ENCODE measurements at regions of chr11 and their contacts with region 1.

Region 1: GRCh38 chr11:118198370-118198769 is 21.9 kb upstream of the SCN2B start:
- DNase-seq: peak; percentile 88
- H3K4me3 ChIP-seq: no peak overlapping the region
- H3K27ac ChIP-seq: no peak overlapping the region
- H3K4me1 ChIP-seq: peaks cover 11% of the 10 kb centered on the region
- H3K27me3 ChIP-seq: no peaks in the 10 kb centered on the region
- CTCF ChIP-seq: peak; percentile 90

Region 2: GRCh38 chr11:118290923-118291322 is 92.6 kb after region 1 on chr11:
- intact Hi-C with region 1: loop called (anchors 2 kb)
- DNase-seq: peak; percentile 75
- H3K4me3 ChIP-seq: no peak overlapping the region
- H3K27ac ChIP-seq: no peak overlapping the region
- H3K4me1 ChIP-seq: no peaks in the 10 kb centered on the region
- H3K27me3 ChIP-seq: no peaks in the 10 kb centered on the region
- CTCF ChIP-seq: peak; percentile 39

Region 3: DNA sequence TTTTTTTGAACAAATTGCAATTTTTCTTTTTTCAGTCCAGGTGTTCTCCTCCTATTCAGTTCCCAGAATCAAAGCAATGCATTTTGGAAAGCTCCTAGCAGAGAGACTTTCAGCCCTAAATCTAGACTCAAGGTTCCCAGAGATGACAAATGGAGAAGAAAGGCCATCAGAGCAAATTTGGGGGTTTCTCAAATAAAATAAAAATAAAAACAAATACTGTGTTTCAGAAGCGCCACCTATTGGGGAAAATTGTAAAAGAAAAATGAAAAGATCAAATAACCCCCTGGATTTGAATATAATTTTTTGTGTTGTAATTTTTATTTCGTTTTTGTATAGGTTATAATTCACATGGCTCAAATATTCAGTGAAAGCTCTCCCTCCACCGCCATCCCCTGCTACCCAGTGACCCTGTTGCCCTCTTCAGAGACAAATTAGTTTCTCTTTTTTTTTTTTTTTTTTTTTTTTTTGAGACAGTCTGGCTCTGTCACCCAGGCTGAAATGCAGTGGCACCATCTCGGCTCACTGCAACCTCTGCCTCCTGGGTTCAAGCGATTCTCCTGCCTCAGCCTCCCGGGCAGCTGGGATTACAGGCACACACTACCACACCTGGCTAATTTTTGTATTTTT is 154.8 kb after region 1 on chr11:
- intact Hi-C with region 1: loop called (anchors 5 kb)
- DNase-seq: no peak
- H3K4me3 ChIP-seq: no peak overlapping the region
- H3K27ac ChIP-seq: no peak overlapping the region
- H3K4me1 ChIP-seq: no peaks in the 10 kb centered on the region
- H3K27me3 ChIP-seq: no peaks in the 10 kb centered on the region
- CTCF ChIP-seq: peak; percentile 53